Esophagus squamous epithelium (tissue), 5 donors: ENCODE measurements at regions of chr9 and their contacts with region 1.

Region 1: DNA sequence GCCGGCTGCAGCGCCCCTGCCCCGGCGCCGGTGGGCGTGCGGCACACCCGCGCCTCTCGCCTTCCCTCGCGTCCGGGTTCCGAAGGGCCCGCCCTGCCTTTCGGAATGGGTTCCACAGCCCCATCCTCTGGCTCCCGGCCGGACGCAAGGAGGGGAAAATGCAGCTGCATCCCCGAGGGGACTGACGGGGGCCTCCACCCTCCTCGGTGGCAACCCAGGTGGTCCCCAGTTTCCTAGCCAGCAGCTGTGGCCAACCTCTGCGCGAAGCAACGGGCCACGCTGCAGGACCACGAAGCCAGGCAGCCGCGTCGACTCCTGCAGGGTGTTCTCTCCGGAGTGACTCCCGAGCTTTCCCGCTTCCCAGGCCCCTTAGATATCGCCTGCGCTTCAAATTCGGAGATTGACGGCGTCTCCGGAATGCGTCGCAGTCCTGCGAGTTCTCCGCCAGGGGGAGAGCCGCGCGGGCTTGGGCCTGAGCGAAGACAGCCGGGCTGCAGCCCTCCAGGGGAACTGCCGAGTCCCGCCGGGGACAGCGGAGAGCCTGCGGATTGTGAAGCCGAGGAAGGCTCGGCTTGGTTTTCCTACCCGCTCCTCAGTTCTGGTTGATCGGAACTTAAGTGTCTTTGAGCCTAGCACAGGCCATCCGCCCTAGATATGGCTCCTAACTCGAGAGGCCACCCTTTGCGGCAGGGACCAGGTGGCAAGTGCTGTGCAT is 582 bp upstream of the APBA1 start:
- DNase-seq: no peak
- H3K4me3 ChIP-seq: peak overlapping the region; percentile 44 to 86 (median 82)
- H3K27ac ChIP-seq: peak overlapping the region; percentile 43 to 86 (median 84)
- H3K4me1 ChIP-seq: peaks cover 4 to 52% (median 13%) of the 10 kb centered on the region in 3 donors
- H3K27me3 ChIP-seq: no peaks in the 10 kb centered on the region
- CTCF ChIP-seq: peak; percentile 33 to 92 (median 84)
- POLR2A ChIP-seq: no peak

Region 2: DNA sequence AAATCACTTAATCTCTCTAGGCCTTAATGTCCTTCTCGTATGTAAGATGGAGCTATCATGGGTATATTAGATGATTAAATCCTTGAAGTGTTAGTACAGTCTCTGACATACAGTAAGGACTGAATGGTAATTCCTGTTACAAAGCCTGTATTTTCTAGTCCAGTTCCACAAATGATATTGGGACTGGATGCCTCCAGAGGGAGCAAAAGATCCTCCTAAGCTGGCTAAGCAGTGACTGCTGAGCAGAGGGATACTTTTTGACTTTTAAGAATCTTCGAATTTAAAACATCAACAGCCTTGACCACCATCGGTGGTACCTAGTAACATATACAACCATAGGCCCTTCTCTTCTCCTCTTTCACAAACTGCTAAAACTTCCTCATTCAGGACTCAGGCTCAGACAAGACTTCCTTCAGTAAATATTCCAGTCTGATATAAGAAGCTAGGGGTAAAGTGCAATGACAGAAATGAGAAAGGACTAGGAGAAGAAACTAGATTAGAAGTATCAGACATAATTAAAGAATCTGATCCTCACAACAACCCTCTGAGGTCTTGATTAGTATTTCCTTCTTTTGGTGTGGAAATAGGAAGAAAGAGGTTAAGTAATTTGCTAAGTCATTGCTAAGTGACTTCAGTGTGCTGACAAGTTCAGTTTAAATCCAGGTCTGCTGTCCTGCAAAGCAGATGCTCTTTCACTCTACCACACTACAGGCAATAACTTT is 73.1 kb after region 1 on chr9:
- intact Hi-C with region 1: loop called (anchors 10 kb)
- DNase-seq: no peak
- H3K4me3 ChIP-seq: no peak overlapping the region
- H3K27ac ChIP-seq: no peak overlapping the region
- H3K4me1 ChIP-seq: peaks cover 0 to 10% (median 0%) of the 10 kb centered on the region in 3 donors
- H3K27me3 ChIP-seq: no peaks in the 10 kb centered on the region
- CTCF ChIP-seq: peak in 1 of 6 experiments; percentile 11
- POLR2A ChIP-seq: no peak